K562 (cell line): ENCODE measurements at regions of chrX and their contacts with region 1.

Region 1: DNA sequence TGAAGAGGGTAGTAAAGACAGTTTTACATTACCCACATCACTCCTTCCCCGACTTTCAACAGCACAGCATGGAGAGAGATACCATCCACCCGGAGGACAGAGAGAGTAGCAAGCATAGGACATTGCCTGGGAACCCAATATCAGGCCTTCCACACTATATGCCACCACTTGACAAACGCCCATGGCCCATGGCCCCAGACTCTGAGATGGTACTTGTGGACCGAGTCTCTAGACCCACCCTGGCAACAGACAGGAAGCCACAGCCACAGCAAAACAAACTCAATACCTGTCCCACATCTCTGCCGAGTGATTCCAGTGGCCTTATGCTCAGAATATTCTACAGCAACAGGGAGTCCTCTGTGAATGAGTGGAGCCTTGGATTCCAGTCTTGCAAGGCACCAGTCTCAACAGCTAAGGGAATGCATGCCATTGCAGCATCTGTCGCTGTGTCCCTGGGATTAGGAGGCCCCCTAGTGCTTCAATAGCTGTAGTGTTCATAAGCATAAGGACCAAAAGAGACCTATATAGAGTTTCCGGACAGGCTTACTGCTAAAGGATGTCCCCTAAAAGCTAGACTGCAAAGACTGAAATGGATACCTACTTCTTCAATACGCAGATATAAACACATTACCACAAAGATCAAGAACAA is 14.7 kb upstream of the CT55 start:
- DNase-seq: peak; percentile 38 to 65 (median 48)
- ATAC-seq: peak; percentile 97
- H3K4me3 ChIP-seq: no peak overlapping the region
- H3K27ac ChIP-seq: no peak overlapping the region
- H3K4me1 ChIP-seq: no peaks in the 10 kb centered on the region
- H3K27me3 ChIP-seq: peaks cover 4 to 7% of the 10 kb centered on the region in 2 experiments; a peak in 2 of 5 replicates
- CTCF ChIP-seq: peak; percentile 62 to 77 (median 66)
- EP300 ChIP-seq: no peak
- POLR2A ChIP-seq: no peak
- RAD21 ChIP-seq: peak; percentile 77 to 85

Region 2: DNA sequence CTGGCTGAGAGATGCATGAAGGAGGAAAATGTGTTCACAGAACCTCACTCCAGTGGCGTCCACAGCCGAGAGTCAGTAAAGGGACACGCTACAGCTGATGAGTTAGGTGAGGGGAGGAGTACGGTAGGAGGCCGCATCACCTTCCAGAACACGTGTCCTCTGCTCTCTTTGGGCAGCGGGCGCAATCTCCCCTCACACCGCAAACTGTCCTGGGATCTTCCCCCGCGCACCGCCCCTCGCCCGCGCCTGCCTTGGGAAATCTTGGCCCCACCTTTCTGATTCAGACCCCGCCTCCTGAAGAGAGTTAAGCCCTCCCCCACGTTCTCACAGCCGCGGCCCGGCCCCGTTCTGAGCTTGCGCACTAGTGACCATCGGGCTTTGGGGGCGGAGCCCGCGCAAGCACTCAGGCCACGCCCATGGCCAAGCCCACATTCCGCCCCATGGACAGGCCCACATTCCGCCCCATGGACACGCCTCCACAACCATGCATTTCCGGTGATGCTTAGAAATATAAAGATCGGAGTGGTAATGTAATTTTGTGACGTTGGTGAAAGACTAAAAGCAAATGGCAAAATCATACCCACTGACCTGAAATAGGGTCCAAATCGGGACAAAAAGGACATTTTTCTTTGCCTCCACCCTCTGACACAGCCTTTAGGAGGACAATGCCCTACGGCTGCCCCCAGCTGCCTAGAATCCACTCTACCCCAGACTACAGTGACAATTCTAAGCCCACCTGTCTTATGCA is 181.9 kb before region 1 on chrX:
- CTCF ChIA-PET with region 1: no interaction called
- POLR2A ChIA-PET with region 1: no interaction called
- in situ Hi-C with region 1: no loop called
- intact Hi-C with region 1: no loop called
- DNase-seq: peak; percentile 92 to 98 (median 96)
- ATAC-seq: peak; percentile 99
- H3K4me3 ChIP-seq: peak overlapping the region; percentile 34
- H3K27ac ChIP-seq: no peak overlapping the region
- H3K4me1 ChIP-seq: peaks cover 5 to 7% of the 10 kb centered on the region in 2 experiments; a peak in 3 of 5 replicates
- H3K27me3 ChIP-seq: no peaks in the 10 kb centered on the region; a peak in 2 of 5 replicates
- CTCF ChIP-seq: no peak
- EP300 ChIP-seq: no peak
- POLR2A ChIP-seq: 0 out of 2 replicates have a peak, but pooled peaks have one; percentile 38
- RAD21 ChIP-seq: no peak

Region 3: GRCh38 chrX:135421537-135421931 is 235.6 kb after region 1 on chrX:
- CTCF ChIA-PET with region 1: no interaction called
- POLR2A ChIA-PET with region 1: no interaction called
- in situ Hi-C with region 1: no loop called
- intact Hi-C with region 1: loop called (anchors 5 kb)
- DNase-seq: peak; percentile 90 to 96 (median 94)
- ATAC-seq: peak; percentile 98
- H3K4me3 ChIP-seq: peak overlapping the region; percentile 39
- H3K27ac ChIP-seq: no peak overlapping the region
- H3K4me1 ChIP-seq: peaks cover 6 to 9% of the 10 kb centered on the region in 2 experiments; a peak in 4 of 5 replicates
- H3K27me3 ChIP-seq: peaks cover 0 to 6% of the 10 kb centered on the region in 2 experiments; a peak in 2 of 5 replicates
- CTCF ChIP-seq: no peak
- EP300 ChIP-seq: no peak
- POLR2A ChIP-seq: 0 out of 2 replicates have a peak, but pooled peaks have one; percentile 30
- RAD21 ChIP-seq: no peak

Region 4: GRCh38 chrX:135477576-135477975 is 291.7 kb after region 1 on chrX:
- CTCF ChIA-PET with region 1: interaction called, 4 read pairs
- POLR2A ChIA-PET with region 1: no interaction called
- in situ Hi-C with region 1: loop called (anchors 10 kb)
- intact Hi-C with region 1: loop called (anchors 1 kb)
- DNase-seq: peak; percentile 14 to 64 (median 30)
- ATAC-seq: peak; percentile 86
- H3K4me3 ChIP-seq: no peak overlapping the region
- H3K27ac ChIP-seq: no peak overlapping the region
- H3K4me1 ChIP-seq: no peaks in the 10 kb centered on the region
- H3K27me3 ChIP-seq: no peaks in the 10 kb centered on the region; a peak in 1 of 5 replicates
- CTCF ChIP-seq: peak; percentile 54 to 67 (median 62)
- EP300 ChIP-seq: no peak
- POLR2A ChIP-seq: no peak
- RAD21 ChIP-seq: peak; percentile 63 to 77